Aorta (tissue), 5 donors: ENCODE measurements at regions of chr5 and their contacts with region 1.

Region 1: GRCh38 chr5:160399402-160400353 is at the start of gene FAM200C:
- DNase-seq: peak; percentile 96
- ATAC-seq: peak; percentile 96
- H3K4me3 ChIP-seq: peak within 1 kb of the TSS; percentile 55 to 95
- H3K27ac ChIP-seq: peak within 1 kb of the TSS; percentile 38 to 96
- H3K4me1 ChIP-seq: peaks cover 2 to 3% of the 10 kb centered on the region in 2 donors
- H3K27me3 ChIP-seq: no peaks in the 10 kb centered on the region
- total RNA-seq, gene FAM200C: 4.9 to 8.2 TPM

Region 2: GRCh38 chr5:160363211-160363610 is 36.5 kb before region 1 on chr5:
- intact Hi-C with region 1: loop called in 1 of 2 experiments (anchors 5 kb)
- DNase-seq: no peak
- ATAC-seq: no peak
- H3K4me3 ChIP-seq: no peak overlapping the region
- H3K27ac ChIP-seq: peak overlapping the region; percentile 6 to 73
- H3K4me1 ChIP-seq: peaks cover 1 to 10% of the 10 kb centered on the region in 2 donors
- H3K27me3 ChIP-seq: no peaks in the 10 kb centered on the region

Region 3: DNA sequence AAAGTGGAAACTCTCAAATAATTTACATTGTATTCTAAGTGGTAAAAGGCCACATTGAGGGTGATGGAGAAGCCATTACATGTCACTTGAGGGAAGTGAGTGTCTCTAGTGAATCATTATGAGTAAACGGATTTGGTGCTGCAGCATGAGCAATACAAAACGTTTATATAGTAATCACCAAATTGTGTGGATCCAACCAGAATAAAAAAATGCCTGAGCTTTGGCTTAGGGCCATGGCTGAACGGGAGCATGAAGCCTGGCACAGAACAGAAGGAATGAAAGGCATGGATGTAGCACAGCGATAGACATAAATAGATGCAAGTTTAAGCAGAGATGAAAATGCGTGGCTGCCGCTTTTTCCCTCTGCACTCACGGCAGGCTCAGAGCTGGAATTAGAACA is 80.2 kb after region 1 on chr5:
- intact Hi-C with region 1: no loop called
- DNase-seq: no peak
- ATAC-seq: no peak
- H3K4me3 ChIP-seq: no peak overlapping the region
- H3K27ac ChIP-seq: no peak overlapping the region
- H3K4me1 ChIP-seq: no peaks in the 10 kb centered on the region
- H3K27me3 ChIP-seq: no peaks in the 10 kb centered on the region